Heart left ventricle (tissue), 16 donors: ENCODE measurements at regions of chr2 and their contacts with region 1.

Region 1: GRCh38 chr2:101704046-101704466 is 6.5 kb downstream of the MAP4K4 start:
- DNase-seq: peak in 3 of 5 donors; percentile 28 to 43 (median 38)
- ATAC-seq: peak; percentile 35 to 61 (median 44)
- H3K4me3 ChIP-seq: peak overlapping the region in 1 of 12 donors; percentile 12
- H3K27ac ChIP-seq: peak overlapping the region in 9 of 12 donors; percentile 6 to 71 (median 36)
- H3K4me1 ChIP-seq: peaks cover 9 to 88% (median 66%) of the 10 kb centered on the region in 12 donors
- H3K27me3 ChIP-seq: no peaks in the 10 kb centered on the region
- CTCF ChIP-seq: no peak
- POLR2A ChIP-seq: no peak

Region 2: DNA sequence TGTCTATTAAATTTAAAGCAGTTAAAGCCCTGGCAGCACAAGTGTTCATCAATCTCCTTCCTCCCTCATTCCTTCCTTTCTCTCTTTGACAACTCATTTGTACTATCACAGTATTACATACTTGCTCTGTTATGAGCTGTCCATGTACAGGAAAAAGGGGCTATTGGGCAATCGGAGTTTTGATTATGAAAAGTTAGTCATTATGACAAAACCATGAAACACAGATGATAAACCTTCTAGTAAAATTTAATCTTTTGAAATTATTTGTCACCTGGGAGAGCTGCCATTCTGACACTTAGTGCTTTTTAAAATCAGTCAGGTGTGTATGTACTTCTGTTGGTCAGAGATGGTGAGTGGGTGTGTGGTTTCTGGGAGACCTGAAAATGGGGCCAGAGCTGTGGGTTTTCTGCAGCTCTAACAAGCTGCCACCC is 32.8 kb after region 1 on chr2:
- intact Hi-C with region 1: loop called in 3 of 10 experiments (anchors 5 kb)
- DNase-seq: no peak
- ATAC-seq: peak in 2 of 4 donors; percentile 38 to 50
- H3K4me3 ChIP-seq: no peak overlapping the region
- H3K27ac ChIP-seq: peak overlapping the region in 11 of 12 donors; percentile 17 to 76 (median 41)
- H3K4me1 ChIP-seq: peaks cover 23 to 93% (median 82%) of the 10 kb centered on the region in 12 donors
- H3K27me3 ChIP-seq: no peaks in the 10 kb centered on the region
- CTCF ChIP-seq: no peak
- POLR2A ChIP-seq: no peak

Region 3: DNA sequence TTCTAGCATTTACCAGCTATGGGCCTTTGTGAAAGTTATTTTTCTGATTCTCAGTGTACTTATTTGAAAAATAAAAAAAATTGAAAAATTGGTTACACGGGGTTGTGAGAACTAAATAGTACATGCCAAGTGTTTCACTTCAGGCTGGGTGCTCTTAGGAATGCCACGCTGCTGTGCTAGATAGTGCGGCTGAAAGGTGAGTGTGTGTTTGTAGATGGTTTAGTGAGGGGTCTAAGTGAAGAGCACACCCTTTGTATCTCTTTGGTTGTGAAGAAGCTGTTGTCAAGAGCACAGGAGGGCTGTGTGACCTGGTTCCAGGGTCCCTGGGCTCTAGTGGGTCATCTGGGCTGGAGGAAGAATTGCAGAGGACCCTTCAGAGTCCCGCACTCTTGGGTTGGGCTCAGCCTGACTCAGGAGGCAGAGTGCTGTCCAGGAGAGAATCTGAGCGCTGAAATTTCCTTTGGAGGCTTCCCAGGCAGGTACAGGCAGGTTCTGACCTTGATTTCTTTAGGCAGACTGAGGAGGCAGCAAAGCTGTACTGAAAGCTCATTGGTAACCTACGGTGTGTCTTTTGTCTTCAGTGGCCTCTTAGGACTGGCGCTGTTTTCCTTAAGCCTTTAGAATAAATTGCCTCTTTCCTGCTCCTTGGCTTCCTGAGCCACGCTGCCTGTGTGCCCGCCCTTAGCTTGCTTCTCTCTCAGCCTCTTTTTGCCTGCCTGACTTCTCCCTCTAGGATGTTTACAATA is 37.9 kb after region 1 on chr2:
- intact Hi-C with region 1: loop called in 3 of 10 experiments (anchors 5 kb)
- DNase-seq: no peak
- ATAC-seq: peak in 3 of 4 donors; percentile 8 to 32 (median 28)
- H3K4me3 ChIP-seq: no peak overlapping the region
- H3K27ac ChIP-seq: peak overlapping the region in 11 of 12 donors; percentile 33 to 74 (median 62)
- H3K4me1 ChIP-seq: peaks cover 15 to 92% (median 75%) of the 10 kb centered on the region in 12 donors
- H3K27me3 ChIP-seq: no peaks in the 10 kb centered on the region
- CTCF ChIP-seq: no peak
- POLR2A ChIP-seq: no peak

Region 4: GRCh38 chr2:101751875-101752619 is 48.0 kb after region 1 on chr2:
- intact Hi-C with region 1: loop called in 4 of 10 experiments (anchors 5 to 10 kb)
- DNase-seq: no peak
- ATAC-seq: peak in 3 of 4 donors; percentile 19 to 38 (median 20)
- H3K4me3 ChIP-seq: no peak overlapping the region
- H3K27ac ChIP-seq: peak overlapping the region in 6 of 12 donors; percentile 4 to 55 (median 20)
- H3K4me1 ChIP-seq: peaks cover 18 to 79% (median 69%) of the 10 kb centered on the region in 12 donors
- H3K27me3 ChIP-seq: no peaks in the 10 kb centered on the region
- CTCF ChIP-seq: no peak
- POLR2A ChIP-seq: no peak

Region 5: DNA sequence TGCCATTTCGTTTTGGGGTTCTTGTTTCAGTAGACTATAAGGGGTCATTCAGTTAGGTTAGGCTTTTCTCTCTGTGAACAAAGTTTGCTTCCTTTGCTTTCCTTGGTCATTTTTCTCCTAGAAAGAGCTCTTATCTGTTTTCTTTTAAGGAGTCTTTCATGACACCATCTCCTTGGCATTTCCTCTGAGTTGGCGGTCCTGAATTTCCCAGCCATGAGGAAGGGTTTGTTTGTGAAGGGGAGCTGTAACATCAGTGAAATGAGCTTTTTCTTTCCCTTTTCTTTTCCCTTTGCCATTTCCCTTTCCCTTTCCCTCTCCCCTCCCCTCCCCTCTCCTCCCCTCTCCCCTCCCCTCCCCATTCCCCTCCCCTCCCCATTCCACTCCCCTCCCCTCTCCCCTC is 55.1 kb after region 1 on chr2:
- intact Hi-C with region 1: loop called in 6 of 10 experiments (anchors 5 to 10 kb)
- DNase-seq: peak in 1 of 5 donors; percentile 53
- ATAC-seq: peak in 3 of 4 donors; percentile 55 to 71 (median 67)
- H3K4me3 ChIP-seq: no peak overlapping the region
- H3K27ac ChIP-seq: peak overlapping the region in 10 of 12 donors; percentile 0 to 60 (median 39)
- H3K4me1 ChIP-seq: peaks cover 0 to 78% (median 51%) of the 10 kb centered on the region in 12 donors
- H3K27me3 ChIP-seq: no peaks in the 10 kb centered on the region
- CTCF ChIP-seq: no peak
- POLR2A ChIP-seq: no peak

Region 6: DNA sequence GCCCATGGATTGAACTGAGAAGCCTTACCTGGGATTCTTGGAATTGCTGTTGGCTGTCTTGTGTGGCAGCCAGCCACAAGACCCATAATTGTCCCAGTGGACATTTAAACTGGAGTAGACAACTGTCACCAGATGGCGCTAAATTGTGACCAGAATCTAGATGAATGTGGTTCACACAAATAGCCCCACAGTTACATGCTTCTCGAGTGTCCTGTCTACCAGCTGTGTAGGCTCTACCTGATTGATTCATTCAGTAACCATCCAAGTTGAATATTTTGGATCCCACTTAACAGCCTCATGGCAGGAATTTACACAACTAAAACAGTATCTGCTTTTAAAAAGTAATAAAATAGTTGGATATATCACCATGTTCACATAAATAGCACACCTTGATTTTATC is 66.7 kb after region 1 on chr2:
- intact Hi-C with region 1: loop called in 3 of 10 experiments (anchors 5 to 10 kb)
- DNase-seq: no peak
- ATAC-seq: peak; percentile 11 to 44 (median 40)
- H3K4me3 ChIP-seq: no peak overlapping the region
- H3K27ac ChIP-seq: peak overlapping the region in 5 of 12 donors; percentile 2 to 14 (median 4)
- H3K4me1 ChIP-seq: peaks cover 8 to 100% (median 88%) of the 10 kb centered on the region in 12 donors
- H3K27me3 ChIP-seq: no peaks in the 10 kb centered on the region
- CTCF ChIP-seq: peak in 9 of 12 donors; percentile 33 to 55 (median 39)
- POLR2A ChIP-seq: no peak